ENCODE measurements at regions of chr10 and their contacts with region 1.

Region 1: DNA sequence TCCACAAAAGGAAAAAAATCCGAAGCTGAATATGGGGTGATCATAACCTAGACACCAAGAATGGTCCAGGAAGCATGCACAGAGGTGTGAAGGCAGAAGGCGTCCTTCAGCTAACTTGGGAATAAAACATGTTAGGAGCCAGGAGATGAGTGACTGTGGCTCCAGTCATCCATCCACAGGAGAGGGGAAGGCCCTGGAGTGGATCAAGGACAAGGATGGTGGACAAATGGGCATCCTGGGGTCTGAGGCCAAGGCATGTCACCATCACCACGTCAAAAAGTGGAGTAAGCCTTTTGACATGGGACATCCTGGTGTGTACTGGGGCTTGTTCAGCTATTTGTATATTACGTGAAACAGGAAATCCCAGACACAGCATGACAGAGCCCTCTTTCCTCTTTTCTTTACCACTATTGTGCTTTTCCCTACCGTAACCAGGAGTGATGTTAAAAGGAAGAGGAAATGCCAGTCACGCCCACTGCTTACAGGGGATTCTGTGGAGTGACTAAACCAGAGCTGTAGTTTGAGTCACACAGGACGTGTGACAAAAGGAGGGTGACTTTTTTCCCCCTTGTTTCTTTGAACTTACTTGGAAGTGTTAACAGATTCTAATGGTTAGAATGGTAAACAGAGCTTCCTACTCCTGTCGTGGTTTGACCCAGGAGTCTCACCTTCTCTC is 15.4 kb downstream of the ACSL5 start:
- DNase-seq: peak; percentile 12
- H3K4me3 Mint-ChIP-seq: no peak overlapping the region
- H3K27ac Mint-ChIP-seq: peak overlapping the region; percentile 70
- H3K4me1 Mint-ChIP-seq: peaks cover 53% of the 10 kb centered on the region
- H3K27me3 Mint-ChIP-seq: no peaks in the 10 kb centered on the region

Region 2: GRCh38 chr10:112375721-112376395 is 13.4 kb before region 1 on chr10:
- intact Hi-C with region 1: loop called (anchors 1 kb)
- DNase-seq: peak; percentile 47
- H3K4me3 Mint-ChIP-seq: peak overlapping the region; percentile 98
- H3K27ac Mint-ChIP-seq: peak overlapping the region; percentile 100
- H3K4me1 Mint-ChIP-seq: peaks cover 47% of the 10 kb centered on the region
- H3K27me3 Mint-ChIP-seq: no peaks in the 10 kb centered on the region

Region 3: GRCh38 chr10:112446855-112447711 is 57.8 kb after region 1 on chr10 and contains the starts of genes VTI1A and ZDHHC6:
- intact Hi-C with region 1: loop called (anchors 5 kb)
- DNase-seq: peak; percentile 80
- H3K4me3 Mint-ChIP-seq: peak within 1 kb of the TSS; percentile 97
- H3K27ac Mint-ChIP-seq: peak within 1 kb of the TSS; percentile 93
- H3K4me1 Mint-ChIP-seq: peaks cover 39% of the 10 kb centered on the region
- H3K27me3 Mint-ChIP-seq: no peaks in the 10 kb centered on the region
- total RNA-seq, gene VTI1A: 33.6 and 39.5 TPM in 2 replicates
- total RNA-seq, gene ZDHHC6: 42.9 and 43.2 TPM in 2 replicates

Region 4: GRCh38 chr10:112532189-112532588 is 142.9 kb after region 1 on chr10:
- intact Hi-C with region 1: loop called (anchors 2 kb)
- DNase-seq: no peak
- H3K4me3 Mint-ChIP-seq: peak overlapping the region; percentile 8
- H3K27ac Mint-ChIP-seq: no peak overlapping the region
- H3K4me1 Mint-ChIP-seq: peaks cover 36% of the 10 kb centered on the region
- H3K27me3 Mint-ChIP-seq: peaks cover 13% of the 10 kb centered on the region